ENCODE measurements at regions of chr16 and their contacts with region 1.

Region 1: GRCh38 chr16:48340054-48340453 is 45.2 kb downstream of the SIAH1 start:
- H3K4me3 ChIP-seq: no peak overlapping the region
- H3K27ac ChIP-seq: no peak overlapping the region
- H3K4me1 ChIP-seq: no peaks in the 10 kb centered on the region
- CTCF ChIP-seq: no peak

Region 2: GRCh38 chr16:48574763-48575162 is 234.7 kb after region 1 on chr16:
- CTCF ChIA-PET with region 1: no interaction called
- POLR2A ChIA-PET with region 1: interaction called, 10 read pairs
- H3K4me3 ChIP-seq: no peak overlapping the region
- H3K27ac ChIP-seq: no peak overlapping the region
- H3K4me1 ChIP-seq: peaks cover 10% of the 10 kb centered on the region
- CTCF ChIP-seq: no peak

Measured in HEK293 (cell line).